CD4-positive, alpha-beta memory T cell (primary cell): ENCODE measurements at regions of chr1 and their contacts with region 1.

Region 1: DNA sequence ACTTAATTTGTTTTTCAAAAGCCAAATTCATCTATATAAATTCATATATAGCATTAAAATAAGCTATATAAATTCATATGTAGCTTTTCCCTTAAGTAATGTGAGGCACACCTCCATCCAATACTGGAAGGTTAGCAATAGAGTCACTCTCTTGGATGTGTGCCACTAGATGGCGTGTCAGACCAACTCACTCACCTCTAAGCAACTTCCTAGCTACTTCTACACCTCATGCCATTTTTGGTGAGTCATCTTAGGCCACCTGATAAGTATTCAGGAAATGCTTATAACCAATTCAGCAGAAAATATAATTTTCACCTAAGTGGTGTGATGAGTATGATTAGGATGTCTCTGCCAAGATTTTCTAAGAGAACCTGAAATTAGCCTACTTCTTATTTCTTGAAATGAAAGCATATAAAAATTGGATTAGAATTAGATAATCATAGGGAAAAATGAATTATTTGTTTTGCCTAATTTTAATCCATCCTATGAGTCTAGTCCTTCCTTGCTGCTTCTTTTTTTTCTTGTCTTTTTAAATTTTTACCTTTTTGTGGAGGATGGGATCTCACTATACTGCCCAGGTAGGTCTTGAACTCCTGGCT is 34.4 kb upstream of the TADA1 start:
- DNase-seq: peak; percentile 73 to 86 (median 80)
- H3K4me3 ChIP-seq: no peak overlapping the region
- H3K4me3 Mint-ChIP-seq: no peak overlapping the region
- H3K27ac ChIP-seq: no peak overlapping the region
- H3K27ac Mint-ChIP-seq: no peak overlapping the region
- H3K4me1 ChIP-seq: peaks cover 3% of the 10 kb centered on the region
- H3K4me1 Mint-ChIP-seq: peaks cover 0 to 7% (median 4%) of the 10 kb centered on the region in 4 donors
- H3K27me3 ChIP-seq: no peaks in the 10 kb centered on the region
- H3K27me3 Mint-ChIP-seq: peaks cover 0 to 5% of the 10 kb centered on the region in 2 donors

Region 2: GRCh38 chr1:166975361-166976129 is 65.0 kb after region 1 on chr1 and contains the start of gene ILDR2:
- CTCF ChIA-PET with region 1: interaction called, 3 read pairs
- POLR2A ChIA-PET with region 1: no interaction called
- intact Hi-C with region 1: loop called (anchors 1 kb)
- DNase-seq: peak; percentile 31 to 72 (median 42)
- H3K4me3 ChIP-seq: peak within 1 kb of the TSS; percentile 28 to 59
- H3K4me3 Mint-ChIP-seq: peak within 1 kb of the TSS; percentile 81 to 96 (median 90)
- H3K27ac ChIP-seq: no peak within 1 kb of the TSS
- H3K27ac Mint-ChIP-seq: peak within 1 kb of the TSS; percentile 20 to 82 (median 73)
- H3K4me1 ChIP-seq: peaks cover 13% of the 10 kb centered on the region
- H3K4me1 Mint-ChIP-seq: peaks cover 13 to 26% (median 21%) of the 10 kb centered on the region in 4 donors
- H3K27me3 ChIP-seq: peaks cover 10% of the 10 kb centered on the region
- H3K27me3 Mint-ChIP-seq: peaks cover 14 to 23% of the 10 kb centered on the region in 2 donors
- total RNA-seq, gene ILDR2: 0.25 to 0.52 TPM

Region 3: GRCh38 chr1:167043752-167044488 is 133.4 kb after region 1 on chr1:
- CTCF ChIA-PET with region 1: interaction called, 14 read pairs
- POLR2A ChIA-PET with region 1: interaction called, 3 read pairs
- intact Hi-C with region 1: no loop called
- DNase-seq: peak; percentile 61 to 83 (median 72)
- H3K4me3 ChIP-seq: peak overlapping the region; percentile 1 to 33
- H3K4me3 Mint-ChIP-seq: peak overlapping the region; percentile 84 to 94 (median 88)
- H3K27ac ChIP-seq: peak overlapping the region; percentile 3
- H3K27ac Mint-ChIP-seq: peak overlapping the region; percentile 70 to 94 (median 80)
- H3K4me1 ChIP-seq: peaks cover 13% of the 10 kb centered on the region
- H3K4me1 Mint-ChIP-seq: peaks cover 4 to 18% (median 12%) of the 10 kb centered on the region in 4 donors
- H3K27me3 ChIP-seq: no peaks in the 10 kb centered on the region
- H3K27me3 Mint-ChIP-seq: peaks cover 4 to 7% of the 10 kb centered on the region in 2 donors

Region 4: GRCh38 chr1:167059045-167059808 is 148.7 kb after region 1 on chr1:
- CTCF ChIA-PET with region 1: interaction called, 842 read pairs
- POLR2A ChIA-PET with region 1: interaction called, 25 read pairs
- intact Hi-C with region 1: loop called (anchors 1 kb)
- DNase-seq: peak; percentile 47 to 67 (median 58)
- H3K4me3 ChIP-seq: no peak overlapping the region
- H3K4me3 Mint-ChIP-seq: peak overlapping the region in 1 of 8 donors; percentile 41
- H3K27ac ChIP-seq: no peak overlapping the region
- H3K27ac Mint-ChIP-seq: peak overlapping the region in 4 of 7 donors; percentile 13 to 88 (median 20)
- H3K4me1 ChIP-seq: peaks cover 7% of the 10 kb centered on the region
- H3K4me1 Mint-ChIP-seq: peaks cover 3 to 10% (median 6%) of the 10 kb centered on the region in 4 donors
- H3K27me3 ChIP-seq: no peaks in the 10 kb centered on the region
- H3K27me3 Mint-ChIP-seq: no peaks in the 10 kb centered on the region

Region 5: DNA sequence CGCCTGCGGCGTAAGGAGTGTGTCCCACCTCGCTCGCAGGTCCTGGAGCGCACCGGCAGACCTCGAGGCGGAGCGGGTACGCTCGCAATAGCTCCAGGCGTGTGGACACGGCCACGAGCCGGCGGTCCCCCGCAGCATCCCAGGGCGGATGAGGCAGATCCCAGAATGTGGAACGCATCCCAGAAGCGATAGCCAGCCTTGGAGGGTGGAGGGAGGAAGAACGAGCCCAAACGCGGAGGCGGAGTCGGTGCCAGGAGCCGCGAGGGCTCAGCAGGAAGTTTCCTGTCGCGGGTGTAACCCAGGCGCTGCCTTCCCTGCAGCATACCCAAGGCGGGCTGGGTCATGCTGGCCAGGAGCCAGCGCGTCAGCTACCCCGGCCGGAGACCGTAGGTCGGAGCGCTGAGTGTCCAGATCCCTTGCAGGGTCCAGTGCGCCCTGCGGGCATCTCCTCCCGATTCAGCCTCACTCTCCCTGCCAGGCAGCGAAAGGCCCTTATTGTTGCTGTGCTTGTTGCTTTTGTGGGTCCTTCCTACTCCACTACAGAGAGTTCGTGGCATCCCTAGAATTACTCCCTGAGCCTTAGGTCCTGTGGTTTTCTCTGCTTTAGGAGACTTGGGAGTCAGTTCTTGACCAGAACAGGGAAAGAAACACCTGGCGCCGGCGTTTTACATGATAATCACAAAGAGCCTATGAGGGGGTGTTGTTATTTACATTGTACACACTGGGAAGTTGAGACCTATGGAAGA is 211.1 kb after region 1 on chr1:
- CTCF ChIA-PET with region 1: interaction called, 18 read pairs
- POLR2A ChIA-PET with region 1: no interaction called
- intact Hi-C with region 1: loop called (anchors 1 kb)
- DNase-seq: peak in 4 of 5 donors; percentile 18 to 40 (median 27)
- H3K4me3 ChIP-seq: peak overlapping the region; percentile 47 to 49
- H3K4me3 Mint-ChIP-seq: peak overlapping the region; percentile 78 to 93 (median 86)
- H3K27ac ChIP-seq: no peak overlapping the region
- H3K27ac Mint-ChIP-seq: peak overlapping the region in 3 of 7 donors; percentile 22 to 60 (median 36)
- H3K4me1 ChIP-seq: peaks cover 7% of the 10 kb centered on the region
- H3K4me1 Mint-ChIP-seq: peaks cover 0 to 12% (median 3%) of the 10 kb centered on the region in 4 donors
- H3K27me3 ChIP-seq: no peaks in the 10 kb centered on the region
- H3K27me3 Mint-ChIP-seq: peaks cover 1 to 7% of the 10 kb centered on the region in 2 donors

Region 6: GRCh38 chr1:167128261-167129227 is 218.0 kb after region 1 on chr1:
- CTCF ChIA-PET with region 1: interaction called, 18 read pairs
- POLR2A ChIA-PET with region 1: no interaction called
- intact Hi-C with region 1: loop called (anchors 1 kb)
- DNase-seq: peak in 2 of 5 donors; percentile 8 to 16
- H3K4me3 ChIP-seq: no peak overlapping the region
- H3K4me3 Mint-ChIP-seq: no peak overlapping the region
- H3K27ac ChIP-seq: no peak overlapping the region
- H3K27ac Mint-ChIP-seq: peak overlapping the region in 1 of 7 donors; percentile 72
- H3K4me1 ChIP-seq: no peaks in the 10 kb centered on the region
- H3K4me1 Mint-ChIP-seq: no peaks in the 10 kb centered on the region
- H3K27me3 ChIP-seq: no peaks in the 10 kb centered on the region
- H3K27me3 Mint-ChIP-seq: peaks cover 16 to 35% of the 10 kb centered on the region in 2 donors